ENCODE measurements at regions of chr10 and their contacts with region 1.

Region 1: GRCh38 chr10:128011175-128011979 is 104.5 kb downstream of the PTPRE start:
- DNase-seq: peak; percentile 75 to 96 (median 88)
- ATAC-seq: peak; percentile 84
- H3K4me3 ChIP-seq: no peak overlapping the region
- H3K27ac ChIP-seq: no peak overlapping the region
- H3K4me1 ChIP-seq: peaks cover 31 to 36% of the 10 kb centered on the region in 2 donors
- H3K27me3 ChIP-seq: no peaks in the 10 kb centered on the region
- CTCF ChIP-seq: peak; percentile 95 to 99

Region 2: GRCh38 chr10:127906548-127907377 is 104.6 kb before region 1 on chr10 and contains the start of gene PTPRE:
- intact Hi-C with region 1: loop called (anchors 2 to 10 kb)
- DNase-seq: peak; percentile 47 to 99 (median 71)
- ATAC-seq: peak; percentile 92
- H3K4me3 ChIP-seq: peak within 1 kb of the TSS; percentile 64 to 77
- H3K27ac ChIP-seq: peak within 1 kb of the TSS; percentile 89 to 91
- H3K4me1 ChIP-seq: peaks cover 10 to 48% of the 10 kb centered on the region in 2 donors
- H3K27me3 ChIP-seq: peaks cover 0 to 9% of the 10 kb centered on the region in 2 donors
- CTCF ChIP-seq: peak; percentile 85
- polyA plus RNA-seq, gene PTPRE: 6.8 to 12.0 (median 9.0) TPM

Region 3: DNA sequence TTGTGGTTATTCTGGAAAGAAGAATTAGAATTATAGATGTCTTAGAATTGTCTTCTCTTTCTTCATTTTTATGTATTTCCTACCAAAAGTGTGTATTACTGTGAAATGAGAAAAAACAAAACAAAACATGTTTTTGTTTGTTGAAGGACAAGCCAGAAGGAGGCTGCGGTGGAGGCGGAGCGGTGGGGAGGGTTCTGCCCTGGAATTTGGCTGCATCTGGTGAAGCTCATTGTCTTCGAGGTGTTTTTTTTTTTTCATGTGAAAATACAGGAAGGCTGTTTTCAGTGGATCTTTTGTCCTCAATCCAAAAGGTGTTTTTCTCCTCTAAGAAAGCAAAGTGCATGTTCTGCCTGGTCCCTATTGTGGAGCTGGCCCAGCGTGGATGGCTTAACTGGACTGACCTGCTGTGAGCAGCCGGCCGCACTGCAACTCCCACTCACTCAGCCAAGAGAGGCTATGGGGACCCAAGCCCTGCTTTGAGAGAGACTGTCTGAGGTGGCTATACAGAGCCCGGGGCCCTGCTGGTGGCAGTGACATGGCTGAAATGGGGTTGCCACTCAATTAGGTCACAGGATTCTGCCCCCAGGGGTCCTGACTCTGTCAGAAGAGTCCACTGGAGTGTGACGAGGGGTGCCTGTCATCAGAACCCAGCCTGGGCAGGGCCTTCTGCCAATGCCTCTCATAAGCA is 299.7 kb after region 1 on chr10:
- intact Hi-C with region 1: no loop called
- DNase-seq: no peak
- ATAC-seq: no peak
- H3K4me3 ChIP-seq: no peak overlapping the region
- H3K27ac ChIP-seq: no peak overlapping the region
- H3K4me1 ChIP-seq: no peaks in the 10 kb centered on the region
- H3K27me3 ChIP-seq: peaks cover 0 to 9% of the 10 kb centered on the region in 2 donors
- CTCF ChIP-seq: no peak

Measured in left lung (tissue), 14 donors.